Astrocyte of the cerebellum (primary cell): ENCODE measurements at regions of chr1 and their contacts with region 1.

Region 1: GRCh38 chr1:153365303-153366095 is 7.8 kb downstream of the S100A9 start:
- DNase-seq: no peak
- H3K4me3 ChIP-seq: no peak overlapping the region
- CTCF ChIP-seq: no peak

Region 2: GRCh38 chr1:153238536-153238935 is 127.0 kb before region 1 on chr1:
- in situ Hi-C with region 1: no loop called
- DNase-seq: no peak
- H3K4me3 ChIP-seq: no peak overlapping the region
- CTCF ChIP-seq: no peak

Region 3: GRCh38 chr1:153415850-153416570 is 50.5 kb after region 1 on chr1 and contains the start of gene S100A7A:
- in situ Hi-C with region 1: loop called (anchors 10 kb)
- DNase-seq: no peak
- H3K4me3 ChIP-seq: no peak within 1 kb of the TSS
- CTCF ChIP-seq: no peak

Region 4: DNA sequence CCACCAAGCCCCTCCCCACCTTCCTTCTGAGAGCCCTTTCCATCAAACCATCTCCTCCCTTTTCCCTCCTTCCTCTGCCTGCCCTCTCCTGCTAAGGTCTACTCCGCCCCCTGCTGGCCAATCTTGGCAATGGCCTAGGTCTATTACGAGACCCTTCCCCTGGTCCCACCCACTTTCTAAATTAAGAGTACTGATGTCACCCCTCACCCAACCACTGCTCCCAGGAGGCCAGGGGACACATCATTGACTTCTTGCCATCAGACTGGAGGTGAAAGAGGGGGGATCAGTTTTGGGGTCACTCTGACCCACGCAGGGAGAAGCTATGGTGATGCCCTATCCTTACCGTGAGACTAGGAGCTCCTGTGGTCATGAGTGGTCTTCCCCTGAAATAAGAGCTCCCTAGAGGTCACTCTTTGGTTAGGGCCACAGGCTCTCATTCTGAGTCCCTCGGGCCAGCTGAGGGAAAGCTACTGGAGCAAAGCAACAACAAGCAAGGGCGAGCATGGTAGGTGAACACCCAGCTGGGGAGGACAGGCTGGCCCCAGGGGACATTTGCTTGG is 129.6 kb after region 1 on chr1:
- in situ Hi-C with region 1: loop called (anchors 5 kb)
- DNase-seq: peak; percentile 36
- H3K4me3 ChIP-seq: no peak overlapping the region
- CTCF ChIP-seq: peak; percentile 91

Region 5: DNA sequence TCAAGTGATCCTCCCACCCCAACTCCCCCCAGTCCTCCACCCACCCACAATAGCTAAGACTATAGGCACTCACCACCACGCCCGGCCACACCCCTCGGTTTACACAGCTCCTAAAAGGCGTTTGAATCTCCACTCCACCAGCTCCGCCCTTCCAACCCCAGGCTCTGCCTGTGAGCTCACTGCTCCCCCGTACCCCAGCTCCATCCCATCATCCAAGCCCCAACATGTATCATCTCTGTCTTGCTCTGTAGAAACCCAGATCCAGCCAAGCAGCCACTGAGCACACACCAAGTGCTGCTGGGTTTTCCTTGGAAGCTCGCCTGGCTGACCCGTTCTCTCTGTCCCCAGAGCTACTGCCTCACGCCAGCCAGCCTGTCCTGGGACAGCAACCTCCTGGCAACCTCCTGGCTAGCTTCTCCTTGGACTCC is 212.1 kb after region 1 on chr1:
- in situ Hi-C with region 1: no loop called
- DNase-seq: no peak
- H3K4me3 ChIP-seq: no peak overlapping the region
- CTCF ChIP-seq: no peak